Calu3 (cell line): ENCODE measurements at regions of chr6 and their contacts with region 1.

Region 1: GRCh38 chr6:31068669-31069340 is 43.6 kb downstream of the C6orf15 start:
- DNase-seq: peak; percentile 94
- H3K4me3 Mint-ChIP-seq: no peak overlapping the region
- H3K27ac Mint-ChIP-seq: no peak overlapping the region
- H3K4me1 Mint-ChIP-seq: no peaks in the 10 kb centered on the region
- H3K27me3 Mint-ChIP-seq: peaks cover 5% of the 10 kb centered on the region
- CTCF ChIP-seq: peak; percentile 99

Region 2: GRCh38 chr6:30730601-30731435 is 338.0 kb before region 1 on chr6:
- CTCF ChIA-PET with region 1: no interaction called
- intact Hi-C with region 1: no loop called
- DNase-seq: peak; percentile 95
- H3K4me3 Mint-ChIP-seq: peak overlapping the region; percentile 66
- H3K27ac Mint-ChIP-seq: peak overlapping the region; percentile 98
- H3K4me1 Mint-ChIP-seq: peaks cover 22% of the 10 kb centered on the region
- H3K27me3 Mint-ChIP-seq: no peaks in the 10 kb centered on the region
- CTCF ChIP-seq: peak; percentile 84

Region 3: GRCh38 chr6:30828027-30828960 is 240.5 kb before region 1 on chr6:
- CTCF ChIA-PET with region 1: interaction called, 18 read pairs
- intact Hi-C with region 1: loop called (anchors 5 kb)
- DNase-seq: peak; percentile 99
- H3K4me3 Mint-ChIP-seq: no peak overlapping the region
- H3K27ac Mint-ChIP-seq: peak overlapping the region; percentile 12
- H3K4me1 Mint-ChIP-seq: peaks cover 37% of the 10 kb centered on the region
- H3K27me3 Mint-ChIP-seq: no peaks in the 10 kb centered on the region
- CTCF ChIP-seq: peak; percentile 95

Region 4: DNA sequence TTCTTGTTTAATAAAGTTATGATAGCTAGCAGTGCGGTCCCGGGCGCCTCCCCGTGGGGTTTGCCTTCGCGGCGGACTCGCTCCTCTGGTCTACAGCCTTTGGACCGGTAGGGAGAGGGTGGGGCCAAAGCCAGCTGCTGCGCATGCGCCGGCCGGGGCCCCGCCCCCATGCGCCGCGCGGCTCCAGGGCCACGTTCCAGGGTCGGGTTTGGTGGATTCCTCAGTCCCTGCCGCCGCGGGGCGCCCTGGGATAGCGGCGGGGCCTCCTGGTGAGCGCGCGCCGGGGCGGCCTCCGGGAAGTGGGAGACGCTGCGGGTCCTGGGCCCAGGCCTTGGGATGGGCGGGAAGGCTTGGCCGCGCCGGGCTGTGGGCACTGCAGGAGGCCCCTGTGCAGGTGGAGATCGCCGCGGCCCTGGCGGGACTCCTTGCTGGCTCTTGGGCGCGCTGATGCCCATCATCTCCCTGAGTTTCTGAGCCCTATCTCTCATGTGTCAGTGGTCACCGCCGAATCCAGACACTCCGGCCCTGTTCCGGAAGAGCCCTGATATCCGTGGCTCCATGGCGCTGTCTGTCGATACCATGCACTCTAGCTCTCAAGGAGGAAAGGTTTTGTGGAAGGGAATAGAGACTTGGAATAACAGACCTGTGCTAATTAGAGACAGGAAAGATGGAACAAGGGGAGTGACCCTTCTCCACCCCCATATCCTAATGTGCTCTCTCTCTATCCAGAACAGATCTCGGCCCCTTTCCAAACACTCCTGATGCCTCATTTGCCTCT is 154.5 kb before region 1 on chr6 and contains the start of gene VARS2:
- CTCF ChIA-PET with region 1: interaction called, 180 read pairs
- intact Hi-C with region 1: loop called (anchors 1 kb)
- DNase-seq: peak; percentile 100
- H3K4me3 Mint-ChIP-seq: peak within 1 kb of the TSS; percentile 78
- H3K27ac Mint-ChIP-seq: peak within 1 kb of the TSS; percentile 71
- H3K4me1 Mint-ChIP-seq: peaks cover 21% of the 10 kb centered on the region
- H3K27me3 Mint-ChIP-seq: no peaks in the 10 kb centered on the region
- CTCF ChIP-seq: peak; percentile 41
- total RNA-seq, gene VARS2: 33.0 and 34.2 TPM in 2 replicates

Region 5: DNA sequence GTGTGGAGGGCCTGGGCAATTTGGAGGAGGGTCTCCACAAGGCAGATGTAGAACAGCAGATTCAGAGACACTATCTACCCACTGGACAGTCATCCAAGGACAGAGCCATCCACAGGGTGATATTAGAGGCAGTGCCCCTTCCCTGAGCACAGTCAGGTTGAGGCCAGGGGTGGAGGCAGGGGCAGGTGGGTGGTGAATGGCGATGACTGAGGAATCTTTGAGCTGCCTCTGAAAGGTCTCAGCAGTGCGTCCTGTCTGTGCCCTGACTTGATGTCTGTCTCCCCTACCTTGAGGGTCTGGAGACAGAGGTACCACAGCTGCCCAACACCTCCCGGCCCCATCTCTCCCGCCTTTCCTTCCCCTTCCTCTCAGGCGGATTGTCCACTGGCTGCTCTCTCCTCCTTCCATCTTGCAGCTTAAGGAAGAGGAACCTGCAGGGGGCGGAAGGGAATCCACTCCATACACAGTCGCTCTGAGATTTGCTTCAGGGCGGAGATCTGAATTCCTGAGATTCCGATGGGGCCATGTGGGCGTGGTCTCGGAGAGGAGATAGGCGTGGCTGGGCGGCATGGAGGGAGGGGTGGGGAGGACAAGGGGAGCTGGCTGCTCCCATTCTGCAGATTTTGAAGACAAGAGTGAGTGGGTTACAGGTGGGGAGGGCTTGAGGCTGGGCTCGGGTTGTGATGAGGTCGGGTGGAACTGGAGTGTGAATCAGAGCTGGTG is 126.3 kb before region 1 on chr6:
- CTCF ChIA-PET with region 1: interaction called, 76 read pairs
- intact Hi-C with region 1: loop called (anchors 1 kb)
- DNase-seq: peak; percentile 99
- H3K4me3 Mint-ChIP-seq: peak overlapping the region; percentile 29
- H3K27ac Mint-ChIP-seq: peak overlapping the region; percentile 45
- H3K4me1 Mint-ChIP-seq: peaks cover 38% of the 10 kb centered on the region
- H3K27me3 Mint-ChIP-seq: peaks cover 10% of the 10 kb centered on the region
- CTCF ChIP-seq: peak; percentile 77

Region 6: DNA sequence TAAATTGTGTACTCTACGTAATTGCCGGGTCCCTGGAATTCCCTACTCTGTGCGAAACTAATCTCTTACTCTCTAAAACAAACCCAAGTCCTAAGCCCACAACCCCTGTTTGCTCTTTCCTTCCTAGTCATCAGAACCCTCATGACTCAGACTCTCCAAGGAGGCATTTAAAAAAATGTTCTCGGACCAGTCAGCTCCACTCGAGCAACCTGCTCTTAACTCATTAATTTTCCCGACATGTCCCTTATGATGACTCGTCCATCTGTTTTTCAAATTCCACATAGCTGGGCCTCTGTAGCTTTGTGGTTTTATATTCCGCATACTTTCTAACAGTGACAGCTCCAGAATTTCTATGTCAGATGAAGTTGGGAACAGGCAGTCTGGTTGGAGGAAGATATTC is 61.1 kb before region 1 on chr6:
- CTCF ChIA-PET with region 1: interaction called, 11 read pairs
- intact Hi-C with region 1: no loop called
- DNase-seq: peak; percentile 72
- H3K4me3 Mint-ChIP-seq: peak overlapping the region; percentile 27
- H3K27ac Mint-ChIP-seq: peak overlapping the region; percentile 85
- H3K4me1 Mint-ChIP-seq: peaks cover 70% of the 10 kb centered on the region
- H3K27me3 Mint-ChIP-seq: no peaks in the 10 kb centered on the region
- CTCF ChIP-seq: no peak

Region 7: GRCh38 chr6:31049518-31049917 is 19.3 kb before region 1 on chr6:
- CTCF ChIA-PET with region 1: interaction called, 12 read pairs
- intact Hi-C with region 1: no loop called
- DNase-seq: no peak
- H3K4me3 Mint-ChIP-seq: no peak overlapping the region
- H3K27ac Mint-ChIP-seq: no peak overlapping the region
- H3K4me1 Mint-ChIP-seq: no peaks in the 10 kb centered on the region
- H3K27me3 Mint-ChIP-seq: peaks cover 15% of the 10 kb centered on the region
- CTCF ChIP-seq: no peak

Region 8: GRCh38 chr6:31114970-31115849 is 46.4 kb after region 1 on chr6:
- CTCF ChIA-PET with region 1: interaction called, 17 read pairs
- intact Hi-C with region 1: no loop called
- DNase-seq: peak; percentile 73
- H3K4me3 Mint-ChIP-seq: peak overlapping the region; percentile 58
- H3K27ac Mint-ChIP-seq: peak overlapping the region; percentile 87
- H3K4me1 Mint-ChIP-seq: peaks cover 44% of the 10 kb centered on the region
- H3K27me3 Mint-ChIP-seq: peaks cover 6% of the 10 kb centered on the region
- CTCF ChIP-seq: peak; percentile 47